Uterus (tissue), 4 donors: ENCODE measurements at regions of chr19 and their contacts with region 1.

Region 1: GRCh38 chr19:1039646-1040475 is at the start of gene ABCA7:
- DNase-seq: peak; percentile 96 to 97
- H3K4me3 ChIP-seq: peak within 1 kb of the TSS; percentile 27 to 36
- H3K27ac ChIP-seq: no peak within 1 kb of the TSS
- H3K4me1 ChIP-seq: peaks cover 0 to 19% of the 10 kb centered on the region in 2 donors
- H3K27me3 ChIP-seq: peaks cover 12 to 15% of the 10 kb centered on the region in 2 donors
- CTCF ChIP-seq: peak in 2 of 4 experiments; percentile 9 to 38
- POLR2A ChIP-seq: peak; percentile 29
- total RNA-seq, gene ABCA7: 0.59 to 10.4 (median 2.7) TPM

Region 2: GRCh38 chr19:940591-941291 is 99.1 kb before region 1 on chr19:
- intact Hi-C with region 1: no loop called
- DNase-seq: peak; percentile 47 to 56
- H3K4me3 ChIP-seq: peak overlapping the region in 1 of 2 donors; percentile 11
- H3K27ac ChIP-seq: peak overlapping the region; percentile 55 to 67
- H3K4me1 ChIP-seq: peaks cover 0 to 17% of the 10 kb centered on the region in 2 donors
- H3K27me3 ChIP-seq: no peaks in the 10 kb centered on the region
- CTCF ChIP-seq: no peak
- POLR2A ChIP-seq: peak in 1 of 2 donors; percentile 12

Region 3: GRCh38 chr19:1070576-1070930 is 30.7 kb after region 1 on chr19:
- intact Hi-C with region 1: no loop called
- DNase-seq: no peak
- H3K4me3 ChIP-seq: no peak overlapping the region
- H3K27ac ChIP-seq: no peak overlapping the region
- H3K4me1 ChIP-seq: peaks cover 0 to 15% of the 10 kb centered on the region in 2 donors
- H3K27me3 ChIP-seq: peaks cover 21 to 47% of the 10 kb centered on the region in 2 donors
- CTCF ChIP-seq: no peak
- POLR2A ChIP-seq: no peak

Region 4: GRCh38 chr19:1082172-1082927 is 42.5 kb after region 1 on chr19:
- intact Hi-C with region 1: loop called (anchors 10 kb)
- DNase-seq: no peak
- H3K4me3 ChIP-seq: no peak overlapping the region
- H3K27ac ChIP-seq: no peak overlapping the region
- H3K4me1 ChIP-seq: peaks cover 0 to 13% of the 10 kb centered on the region in 2 donors
- H3K27me3 ChIP-seq: no peaks in the 10 kb centered on the region
- CTCF ChIP-seq: no peak
- POLR2A ChIP-seq: no peak

Region 5: GRCh38 chr19:1113033-1113985 is 73.4 kb after region 1 on chr19:
- intact Hi-C with region 1: no loop called
- DNase-seq: peak; percentile 95 to 97
- H3K4me3 ChIP-seq: no peak overlapping the region
- H3K27ac ChIP-seq: peak overlapping the region; percentile 71 to 72
- H3K4me1 ChIP-seq: peaks cover 5 to 7% of the 10 kb centered on the region in 2 donors
- H3K27me3 ChIP-seq: no peaks in the 10 kb centered on the region
- CTCF ChIP-seq: peak; percentile 96 to 97 (median 96)
- POLR2A ChIP-seq: peak; percentile 27 to 39

Region 6: GRCh38 chr19:1295169-1296012 is 255.5 kb after region 1 on chr19:
- intact Hi-C with region 1: no loop called
- DNase-seq: no peak
- H3K4me3 ChIP-seq: no peak overlapping the region
- H3K27ac ChIP-seq: no peak overlapping the region
- H3K4me1 ChIP-seq: peaks cover 0 to 8% of the 10 kb centered on the region in 2 donors
- H3K27me3 ChIP-seq: peaks cover 9 to 19% of the 10 kb centered on the region in 2 donors
- CTCF ChIP-seq: no peak
- POLR2A ChIP-seq: no peak